HEK293 (cell line): ENCODE measurements at regions of chr1 and their contacts with region 1.

Region 1: DNA sequence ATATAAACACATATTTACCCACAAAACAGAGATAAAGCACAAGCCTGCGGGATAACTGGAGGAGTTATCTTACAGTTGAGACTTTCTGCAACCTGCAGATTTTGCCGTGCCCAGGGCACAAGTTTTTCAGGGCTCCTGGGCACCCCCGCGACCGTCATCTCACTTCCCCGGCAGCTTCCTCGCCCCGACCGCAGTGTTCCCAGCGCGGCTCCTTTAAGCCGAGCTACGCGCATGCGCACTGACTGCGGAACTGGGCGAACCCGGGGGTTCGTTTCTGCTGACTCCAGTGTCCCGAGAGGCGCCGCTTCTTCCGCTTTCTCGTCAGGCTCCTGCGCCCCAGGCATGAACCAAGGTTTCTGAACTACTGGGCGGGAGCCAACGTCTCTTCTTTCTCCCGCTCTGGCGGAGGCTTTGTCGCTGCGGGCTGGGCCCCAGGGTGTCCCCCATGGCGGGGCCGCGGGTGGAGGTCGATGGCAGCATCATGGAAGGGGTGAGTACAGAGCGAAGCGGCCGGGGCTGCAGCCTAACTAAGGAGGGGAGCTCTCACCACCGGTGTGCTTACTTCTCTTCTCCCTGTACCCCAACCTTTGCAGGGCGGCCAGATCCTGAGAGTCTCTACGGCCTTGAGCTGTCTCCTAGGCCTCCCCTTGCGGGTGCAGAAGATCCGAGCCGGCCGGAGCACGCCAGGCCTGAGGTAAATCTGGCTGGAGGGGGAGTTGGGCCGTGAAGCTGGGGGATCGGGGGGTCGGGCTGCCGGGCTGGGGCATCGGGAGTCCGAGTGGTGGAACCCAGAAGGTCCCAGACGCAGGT is at the start of gene RTCA:
- H3K4me3 ChIP-seq: peak within 1 kb of the TSS; percentile 98
- H3K27ac ChIP-seq: peak within 1 kb of the TSS; percentile 73; the same call in 1 of the 2 replicates
- H3K4me1 ChIP-seq: no peaks in the 10 kb centered on the region
- CTCF ChIP-seq: no peak

Region 2: GRCh38 chr1:100249537-100250257 is 16.4 kb before region 1 on chr1 and contains the start of gene DBT:
- CTCF ChIA-PET with region 1: interaction called, 3 read pairs
- POLR2A ChIA-PET with region 1: interaction called, 28 read pairs
- H3K4me3 ChIP-seq: peak within 1 kb of the TSS; percentile 68
- H3K27ac ChIP-seq: peak within 1 kb of the TSS; percentile 37; the same call in 1 of the 2 replicates
- H3K4me1 ChIP-seq: no peaks in the 10 kb centered on the region
- CTCF ChIP-seq: no peak

Region 3: GRCh38 chr1:100351095-100351891 is 85.2 kb after region 1 on chr1:
- CTCF ChIA-PET with region 1: interaction called, 3 read pairs
- POLR2A ChIA-PET with region 1: interaction called, 18 read pairs
- H3K4me3 ChIP-seq: peak overlapping the region; percentile 82
- H3K27ac ChIP-seq: peak overlapping the region; percentile 67
- H3K4me1 ChIP-seq: peaks cover 5% of the 10 kb centered on the region; the same call in 1 of the 2 replicates
- CTCF ChIP-seq: peak; percentile 91